PC-9 (cell line): ENCODE measurements at regions of chr19 and their contacts with region 1.

Region 1: GRCh38 chr19:11197264-11198174 is at the start of gene KANK2:
- DNase-seq: peak; percentile 84 to 95
- H3K4me3 ChIP-seq: peak within 1 kb of the TSS; percentile 76
- H3K27ac ChIP-seq: peak within 1 kb of the TSS; percentile 37
- H3K4me1 ChIP-seq: 0 out of 2 replicates have a peak, but pooled peaks cover 6% of the 10 kb centered on the region
- H3K27me3 ChIP-seq: no peaks in the 10 kb centered on the region
- CTCF ChIP-seq: no peak; the same call in 1 of the 2 replicates
- total RNA-seq, gene KANK2: 32.9 and 39.4 TPM in 2 replicates

Region 2: DNA sequence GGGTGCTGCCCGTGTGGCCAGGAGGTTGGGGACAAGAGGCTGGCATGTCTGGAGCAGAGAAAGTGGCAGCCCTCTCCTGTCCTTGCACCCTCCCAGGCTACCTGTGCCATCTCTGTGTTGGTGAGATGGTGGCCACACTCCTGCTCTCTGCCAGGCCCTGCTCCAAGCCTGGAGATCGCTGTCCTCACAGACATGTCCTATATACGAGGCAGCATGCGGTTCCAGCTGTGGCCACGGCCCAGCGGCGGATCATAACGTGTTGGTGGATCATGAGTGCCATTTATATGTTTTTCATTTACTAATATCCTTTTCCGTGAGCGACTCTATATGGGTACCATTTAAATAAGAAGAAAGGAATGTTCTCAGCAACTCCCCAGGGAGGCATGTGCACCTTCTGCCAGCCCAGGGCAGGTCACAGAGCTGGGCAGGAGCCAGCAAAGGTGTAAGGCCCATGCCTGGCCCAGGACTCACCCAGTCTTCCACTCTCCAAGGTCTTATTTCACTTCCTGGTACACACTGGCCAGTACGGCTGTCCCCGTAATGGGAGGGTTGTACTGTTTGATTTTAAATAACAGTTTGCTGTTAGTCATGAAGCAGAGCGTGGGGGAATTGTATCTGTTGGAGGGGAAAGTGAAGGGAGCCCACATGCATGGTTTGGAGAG is 155.4 kb before region 1 on chr19:
- CTCF ChIA-PET with region 1: no interaction called
- POLR2A ChIA-PET with region 1: no interaction called
- intact Hi-C with region 1: no loop called
- DNase-seq: peak; percentile 79 to 90
- H3K4me3 ChIP-seq: no peak overlapping the region
- H3K27ac ChIP-seq: no peak overlapping the region; the same call in 1 of the 2 replicates
- H3K4me1 ChIP-seq: no peaks in the 10 kb centered on the region
- H3K27me3 ChIP-seq: no peaks in the 10 kb centered on the region
- CTCF ChIP-seq: no peak

Region 3: DNA sequence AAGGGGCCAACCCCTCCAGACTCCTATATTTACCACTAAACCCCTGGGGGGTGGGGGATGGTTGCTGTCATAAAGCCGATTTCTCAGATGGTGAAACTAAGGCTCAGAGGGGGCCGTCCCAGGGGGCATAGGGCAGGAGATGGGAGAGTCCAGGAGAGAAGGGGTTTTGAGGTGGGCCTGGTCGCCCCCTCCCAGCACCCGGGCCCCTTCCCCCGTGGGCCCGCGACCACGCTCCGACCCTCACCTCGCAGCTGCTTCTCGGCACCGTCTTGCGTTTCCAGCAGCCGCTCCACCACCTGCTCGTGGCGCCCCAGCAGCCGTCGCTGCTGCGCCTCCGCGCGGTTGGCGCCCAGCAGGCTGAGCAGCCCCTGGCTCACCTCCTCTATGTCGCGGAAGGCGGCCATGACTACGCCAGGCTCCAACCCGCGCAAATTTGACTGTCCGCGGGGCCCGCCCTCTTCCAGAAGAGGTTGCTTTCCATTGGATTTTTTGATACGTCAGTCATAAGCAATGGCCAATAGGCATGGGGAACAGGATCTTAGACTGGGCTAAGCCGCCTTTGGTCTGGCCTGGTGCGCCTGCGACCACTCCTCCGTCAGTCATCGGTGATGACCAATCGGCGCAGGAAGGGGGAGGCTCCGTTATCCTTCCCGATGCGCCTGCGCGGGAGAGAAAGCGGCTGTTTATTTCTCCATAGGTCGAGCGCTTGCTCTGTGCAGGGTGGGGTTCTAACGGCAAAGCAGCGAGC is 42.0 kb before region 1 on chr19 and contains the start of gene SPC24:
- CTCF ChIA-PET with region 1: no interaction called
- POLR2A ChIA-PET with region 1: no interaction called
- intact Hi-C with region 1: loop called (anchors 5 kb)
- DNase-seq: peak; percentile 96 to 97
- H3K4me3 ChIP-seq: peak within 1 kb of the TSS; percentile 72
- H3K27ac ChIP-seq: no peak within 1 kb of the TSS
- H3K4me1 ChIP-seq: peaks cover 40% of the 10 kb centered on the region
- H3K27me3 ChIP-seq: no peaks in the 10 kb centered on the region
- CTCF ChIP-seq: no peak
- total RNA-seq, gene SPC24: 50.9 and 59.2 TPM in 2 replicates